Activated B cell treated with CpG ODN at 0.5 μM for 24 hours (primary cell): ENCODE measurements at regions of chr13 and their contacts with region 1.

Region 1: DNA sequence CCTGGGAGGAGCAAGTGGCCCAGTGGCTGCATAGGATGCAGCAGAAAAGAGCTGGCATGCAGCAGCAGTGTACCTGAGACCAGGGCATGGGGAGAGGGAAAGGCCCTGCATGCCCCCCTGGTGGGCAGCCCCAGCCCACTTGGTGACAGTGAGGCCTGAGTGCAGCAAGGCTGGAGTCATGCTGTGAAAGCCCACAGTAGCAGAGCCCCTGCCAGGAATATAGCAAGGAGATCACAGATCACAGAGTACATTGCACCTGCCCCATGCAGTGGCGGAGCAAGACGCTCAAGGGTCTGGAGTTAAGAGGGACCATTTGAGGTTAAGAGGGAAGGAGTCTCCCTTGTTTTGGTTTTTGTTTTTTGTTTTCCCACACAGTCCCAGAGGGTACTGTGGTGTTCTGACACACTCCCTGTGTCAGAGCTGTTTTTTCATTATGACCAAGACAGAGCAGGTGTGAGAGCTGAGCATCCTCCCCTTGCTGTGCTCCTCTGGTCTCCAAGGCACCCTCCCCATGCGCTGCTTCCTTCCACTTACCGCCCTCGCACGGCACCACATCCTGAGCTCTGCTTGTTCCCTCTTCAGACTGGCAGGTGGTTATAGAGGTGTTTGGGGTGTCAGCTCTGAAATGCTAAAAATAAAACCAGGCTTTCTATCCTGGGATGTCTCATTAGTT is 85.0 kb upstream of the UBL3 start:
- DNase-seq: no peak
- ATAC-seq: peak; percentile 85
- H3K4me3 Mint-ChIP-seq: peak overlapping the region; percentile 55
- H3K27ac Mint-ChIP-seq: no peak overlapping the region
- H3K4me1 Mint-ChIP-seq: peaks cover 27% of the 10 kb centered on the region
- H3K27me3 Mint-ChIP-seq: peaks cover 1% of the 10 kb centered on the region
- CTCF ChIP-seq: no peak

Region 2: DNA sequence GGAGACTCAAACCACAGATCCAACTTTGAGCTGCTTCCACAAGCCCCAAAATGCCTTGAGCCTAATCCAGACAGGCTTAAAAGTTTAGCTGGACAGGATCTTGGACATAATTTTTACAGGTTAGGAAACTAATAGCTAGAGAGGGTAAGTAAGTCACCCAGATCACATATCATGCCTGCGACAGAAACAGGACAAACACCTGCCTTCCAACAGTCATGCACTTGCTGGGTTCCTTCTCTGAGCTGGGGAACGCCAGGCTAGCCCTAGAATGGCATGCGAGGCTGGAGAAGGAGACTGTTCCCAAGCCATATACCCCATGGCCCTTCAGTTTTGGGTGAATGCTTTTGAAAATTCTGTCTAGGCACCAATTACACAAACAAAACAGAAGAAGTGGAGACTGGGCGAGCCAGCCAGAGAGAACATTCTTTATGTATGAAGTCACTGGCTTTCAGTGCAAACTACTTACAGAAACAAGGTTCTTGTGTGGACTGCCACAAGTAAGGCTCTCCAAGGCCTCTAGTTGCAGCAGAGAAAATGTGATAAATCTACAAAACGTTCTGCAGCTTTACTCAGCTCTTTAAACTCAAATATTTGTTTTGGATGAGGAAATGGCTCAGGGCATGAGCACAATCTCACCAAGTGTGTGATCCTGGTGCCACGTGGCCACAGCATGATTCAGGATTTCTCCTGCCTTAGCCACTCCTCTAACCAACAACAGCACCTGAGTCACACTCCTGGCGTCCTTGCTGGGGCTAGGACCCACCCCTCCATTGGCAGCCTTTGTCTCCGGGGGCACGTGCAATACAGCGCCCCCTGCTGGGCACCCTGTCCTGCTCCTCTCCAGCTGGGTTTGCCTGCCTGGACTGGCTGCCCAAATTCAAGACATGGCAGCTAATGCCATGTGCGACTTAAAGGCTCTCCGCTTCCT is 11.6 kb before region 1 on chr13:
- CTCF ChIA-PET with region 1: interaction called, 18 read pairs
- POLR2A ChIA-PET with region 1: no interaction called
- intact Hi-C with region 1: no loop called
- DNase-seq: peak; percentile 40
- ATAC-seq: peak; percentile 65
- H3K4me3 Mint-ChIP-seq: no peak overlapping the region
- H3K27ac Mint-ChIP-seq: no peak overlapping the region
- H3K4me1 Mint-ChIP-seq: no peaks in the 10 kb centered on the region
- H3K27me3 Mint-ChIP-seq: peaks cover 5% of the 10 kb centered on the region
- CTCF ChIP-seq: peak; percentile 85

Region 3: GRCh38 chr13:29958476-29958875 is 23.0 kb after region 1 on chr13:
- CTCF ChIA-PET with region 1: no interaction called
- POLR2A ChIA-PET with region 1: no interaction called
- intact Hi-C with region 1: no loop called
- DNase-seq: no peak
- ATAC-seq: no peak
- H3K4me3 Mint-ChIP-seq: no peak overlapping the region
- H3K27ac Mint-ChIP-seq: no peak overlapping the region
- H3K4me1 Mint-ChIP-seq: peaks cover 12% of the 10 kb centered on the region
- H3K27me3 Mint-ChIP-seq: peaks cover 7% of the 10 kb centered on the region
- CTCF ChIP-seq: no peak

Region 4: GRCh38 chr13:30577401-30577852 is 642.0 kb after region 1 on chr13:
- CTCF ChIA-PET with region 1: no interaction called
- POLR2A ChIA-PET with region 1: no interaction called
- intact Hi-C with region 1: no loop called
- DNase-seq: no peak
- ATAC-seq: peak; percentile 65
- H3K4me3 Mint-ChIP-seq: no peak overlapping the region
- H3K27ac Mint-ChIP-seq: no peak overlapping the region
- H3K4me1 Mint-ChIP-seq: peaks cover 14% of the 10 kb centered on the region
- H3K27me3 Mint-ChIP-seq: no peaks in the 10 kb centered on the region
- CTCF ChIP-seq: no peak